ENCODE measurements at regions of chr20 and their contacts with region 1.

Region 1: GRCh38 chr20:45373353-45374100 is 4.6 kb downstream of the TP53TG5 start:
- DNase-seq: peak; percentile 90
- H3K4me3 Mint-ChIP-seq: peak overlapping the region; percentile 68
- H3K27ac Mint-ChIP-seq: peak overlapping the region; percentile 89
- H3K4me1 Mint-ChIP-seq: peaks cover 39% of the 10 kb centered on the region
- H3K27me3 Mint-ChIP-seq: no peaks in the 10 kb centered on the region

Region 2: GRCh38 chr20:45322952-45323383 is 50.6 kb before region 1 on chr20:
- CTCF ChIA-PET with region 1: interaction called, 10 read pairs
- POLR2A ChIA-PET with region 1: no interaction called
- DNase-seq: no peak
- H3K4me3 Mint-ChIP-seq: no peak overlapping the region
- H3K27ac Mint-ChIP-seq: no peak overlapping the region
- H3K4me1 Mint-ChIP-seq: peaks cover 32% of the 10 kb centered on the region
- H3K27me3 Mint-ChIP-seq: no peaks in the 10 kb centered on the region

Region 3: DNA sequence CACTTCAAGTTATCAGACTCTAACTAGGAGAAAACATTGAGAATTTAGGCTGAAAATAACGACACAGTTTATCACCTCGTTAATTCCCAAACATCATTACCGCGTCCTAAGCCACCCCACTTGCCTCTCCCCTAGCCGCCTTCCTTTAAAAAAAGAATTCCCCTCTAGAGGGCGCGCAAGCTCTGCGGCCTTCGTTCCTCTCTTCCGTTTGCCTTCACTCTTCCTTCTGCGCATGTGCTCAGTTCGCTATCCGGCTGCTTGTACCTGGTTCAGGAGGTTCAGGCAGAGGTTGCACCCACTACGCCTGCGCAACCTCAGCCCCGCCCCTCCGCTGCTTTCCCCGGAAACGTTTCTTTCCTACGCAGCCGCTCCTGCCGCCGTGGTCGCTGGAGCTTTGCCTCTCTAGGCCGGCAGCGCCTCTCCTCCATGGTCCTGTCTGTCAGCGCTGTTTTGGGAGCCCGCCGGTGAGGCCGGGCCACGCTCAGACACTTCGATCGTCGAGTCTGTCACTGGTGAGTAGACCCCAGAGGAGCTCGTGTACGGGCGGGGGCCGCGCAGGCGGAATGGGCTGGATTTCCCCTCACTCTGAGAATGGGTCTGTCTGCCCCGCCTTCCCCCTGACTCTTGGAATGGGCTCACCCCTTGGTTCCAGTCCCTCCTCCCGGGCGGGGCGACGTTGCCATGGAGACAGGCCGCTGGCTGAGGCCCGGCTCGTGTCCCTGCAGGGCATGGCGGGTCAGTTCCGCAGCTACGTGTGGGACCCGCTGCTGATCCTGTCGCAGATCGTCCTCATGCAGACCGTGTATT is 10.5 kb before region 1 on chr20 and contains the start of gene SYS1:
- CTCF ChIA-PET with region 1: interaction called, 71 read pairs
- POLR2A ChIA-PET with region 1: interaction called, 10 read pairs
- DNase-seq: peak; percentile 99
- H3K4me3 Mint-ChIP-seq: peak within 1 kb of the TSS; percentile 92
- H3K27ac Mint-ChIP-seq: peak within 1 kb of the TSS; percentile 92
- H3K4me1 Mint-ChIP-seq: peaks cover 59% of the 10 kb centered on the region
- H3K27me3 Mint-ChIP-seq: no peaks in the 10 kb centered on the region
- total RNA-seq, gene SYS1: 23.9 to 25.6 TPM

Region 4: DNA sequence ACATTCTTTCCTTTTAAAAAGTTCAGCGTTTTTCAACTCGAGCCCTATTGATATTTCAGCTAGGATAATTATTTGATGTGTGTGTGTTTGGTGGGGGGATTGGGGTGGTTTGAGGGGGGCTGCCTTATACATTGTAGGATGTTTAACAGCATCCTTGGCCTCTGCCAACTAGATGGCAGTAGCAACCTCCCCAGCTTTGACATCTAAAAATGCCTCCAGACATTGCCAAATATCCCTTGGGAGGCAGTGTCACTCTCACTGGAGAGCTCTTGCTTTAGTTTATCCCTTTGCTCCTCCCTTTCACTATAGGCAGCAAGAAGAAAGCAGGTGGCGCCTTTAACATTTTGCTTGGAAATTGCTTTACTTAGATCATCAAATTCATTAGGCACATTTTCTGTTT is 19.2 kb after region 1 on chr20:
- CTCF ChIA-PET with region 1: interaction called, 17 read pairs
- POLR2A ChIA-PET with region 1: no interaction called
- DNase-seq: no peak
- H3K4me3 Mint-ChIP-seq: no peak overlapping the region
- H3K27ac Mint-ChIP-seq: no peak overlapping the region
- H3K4me1 Mint-ChIP-seq: no peaks in the 10 kb centered on the region
- H3K27me3 Mint-ChIP-seq: no peaks in the 10 kb centered on the region

Region 5: DNA sequence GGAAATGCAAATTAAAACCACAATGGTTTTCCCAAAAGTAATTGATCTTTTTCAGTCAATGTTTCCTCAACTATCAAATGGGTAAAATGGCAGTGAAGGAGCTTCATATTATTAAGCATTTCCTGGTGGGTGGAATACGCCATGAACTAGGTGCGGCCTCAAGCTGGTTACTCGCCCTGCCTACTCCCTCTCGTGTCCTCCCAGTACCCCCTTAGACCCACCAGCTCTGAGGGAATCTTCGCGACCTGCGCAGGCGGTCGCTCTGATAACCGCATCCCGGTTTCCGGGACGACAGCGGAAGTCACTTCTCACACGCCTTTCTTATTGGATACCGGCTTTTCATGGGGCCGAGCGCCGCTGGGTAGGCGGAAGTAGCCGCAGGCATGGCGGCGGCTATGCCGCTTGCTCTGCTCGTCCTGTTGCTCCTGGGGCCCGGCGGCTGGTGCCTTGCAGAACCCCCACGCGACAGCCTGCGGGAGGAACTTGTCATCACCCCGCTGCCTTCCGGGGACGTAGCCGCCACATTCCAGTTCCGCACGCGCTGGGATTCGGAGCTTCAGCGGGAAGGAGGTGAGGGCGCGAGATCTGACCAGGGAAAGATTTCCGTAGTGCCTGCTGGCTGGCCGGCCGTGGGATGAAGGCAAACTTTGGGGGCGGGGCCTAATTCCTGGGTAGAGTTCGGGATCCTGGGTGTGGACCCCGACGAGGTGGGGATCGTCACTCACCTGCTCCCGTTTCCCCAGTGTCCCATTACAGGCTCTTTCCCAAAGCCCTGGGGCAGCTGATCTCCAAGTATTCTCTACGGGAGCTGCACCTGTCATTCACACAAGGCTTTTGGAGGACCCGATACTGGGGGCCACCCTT is 42.5 kb after region 1 on chr20 and contains the start of gene PIGT:
- CTCF ChIA-PET with region 1: interaction called, 13 read pairs
- POLR2A ChIA-PET with region 1: no interaction called
- DNase-seq: peak; percentile 91
- H3K4me3 Mint-ChIP-seq: peak within 1 kb of the TSS; percentile 93
- H3K27ac Mint-ChIP-seq: peak within 1 kb of the TSS; percentile 94
- H3K4me1 Mint-ChIP-seq: peaks cover 36% of the 10 kb centered on the region
- H3K27me3 Mint-ChIP-seq: no peaks in the 10 kb centered on the region
- total RNA-seq, gene PIGT: 66.3 to 77.9 TPM

Region 6: DNA sequence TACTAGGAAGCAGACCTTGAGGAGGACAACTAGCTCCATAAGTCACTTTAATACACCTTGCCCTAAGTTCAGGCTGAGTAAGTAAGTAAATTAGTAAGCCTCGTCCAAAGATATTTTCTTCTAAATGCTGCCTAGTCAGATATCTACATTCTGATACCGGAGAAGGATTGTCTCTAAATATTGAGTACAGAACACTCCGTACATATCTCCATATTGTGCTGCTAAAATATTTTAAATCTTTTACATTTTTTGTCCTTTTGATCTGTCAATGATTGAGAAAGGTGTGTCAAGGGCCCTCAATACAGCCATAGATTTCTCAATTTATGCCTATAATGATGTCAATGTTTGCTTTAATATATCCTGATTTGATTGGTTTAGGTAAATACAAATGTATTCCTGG is 202.4 kb after region 1 on chr20:
- CTCF ChIA-PET with region 1: no interaction called
- POLR2A ChIA-PET with region 1: no interaction called
- DNase-seq: no peak
- H3K4me3 Mint-ChIP-seq: no peak overlapping the region
- H3K27ac Mint-ChIP-seq: no peak overlapping the region
- H3K4me1 Mint-ChIP-seq: no peaks in the 10 kb centered on the region
- H3K27me3 Mint-ChIP-seq: peaks cover 32% of the 10 kb centered on the region

Region 7: GRCh38 chr20:45771182-45771759 is 397.7 kb after region 1 on chr20:
- CTCF ChIA-PET with region 1: interaction called, 10 read pairs
- POLR2A ChIA-PET with region 1: no interaction called
- DNase-seq: peak; percentile 85
- H3K4me3 Mint-ChIP-seq: no peak overlapping the region
- H3K27ac Mint-ChIP-seq: no peak overlapping the region
- H3K4me1 Mint-ChIP-seq: peaks cover 4% of the 10 kb centered on the region
- H3K27me3 Mint-ChIP-seq: peaks cover 2% of the 10 kb centered on the region

Measured in activated CD4-positive, alpha-beta T cell treated with anti-CD3 and anti-CD28 coated beads, Interleukin-2, amount 10 ng/mL, durations not matched to agents 7 days and 5 days (primary cell).